ENCODE measurements at regions of chr16 and their contacts with region 1.

Region 1: GRCh38 chr16:49876716-49877129 is 20.8 kb upstream of the ZNF423 start:
- DNase-seq: peak; percentile 88
- ATAC-seq: peak; percentile 89
- H3K4me3 Mint-ChIP-seq: peak overlapping the region; percentile 76
- H3K27ac Mint-ChIP-seq: no peak overlapping the region
- H3K4me1 Mint-ChIP-seq: peaks cover 4% of the 10 kb centered on the region
- H3K27me3 Mint-ChIP-seq: peaks cover 9% of the 10 kb centered on the region
- CTCF ChIP-seq: peak; percentile 95

Region 2: GRCh38 chr16:49776085-49776595 is 100.6 kb before region 1 on chr16:
- CTCF ChIA-PET with region 1: interaction called, 10 read pairs
- POLR2A ChIA-PET with region 1: no interaction called
- DNase-seq: peak; percentile 76
- ATAC-seq: peak; percentile 90
- H3K4me3 Mint-ChIP-seq: peak overlapping the region; percentile 11; the same call in 1 of the 2 replicates
- H3K27ac Mint-ChIP-seq: peak overlapping the region; percentile 97
- H3K4me1 Mint-ChIP-seq: peaks cover 52% of the 10 kb centered on the region
- H3K27me3 Mint-ChIP-seq: no peaks in the 10 kb centered on the region
- CTCF ChIP-seq: no peak

Region 3: DNA sequence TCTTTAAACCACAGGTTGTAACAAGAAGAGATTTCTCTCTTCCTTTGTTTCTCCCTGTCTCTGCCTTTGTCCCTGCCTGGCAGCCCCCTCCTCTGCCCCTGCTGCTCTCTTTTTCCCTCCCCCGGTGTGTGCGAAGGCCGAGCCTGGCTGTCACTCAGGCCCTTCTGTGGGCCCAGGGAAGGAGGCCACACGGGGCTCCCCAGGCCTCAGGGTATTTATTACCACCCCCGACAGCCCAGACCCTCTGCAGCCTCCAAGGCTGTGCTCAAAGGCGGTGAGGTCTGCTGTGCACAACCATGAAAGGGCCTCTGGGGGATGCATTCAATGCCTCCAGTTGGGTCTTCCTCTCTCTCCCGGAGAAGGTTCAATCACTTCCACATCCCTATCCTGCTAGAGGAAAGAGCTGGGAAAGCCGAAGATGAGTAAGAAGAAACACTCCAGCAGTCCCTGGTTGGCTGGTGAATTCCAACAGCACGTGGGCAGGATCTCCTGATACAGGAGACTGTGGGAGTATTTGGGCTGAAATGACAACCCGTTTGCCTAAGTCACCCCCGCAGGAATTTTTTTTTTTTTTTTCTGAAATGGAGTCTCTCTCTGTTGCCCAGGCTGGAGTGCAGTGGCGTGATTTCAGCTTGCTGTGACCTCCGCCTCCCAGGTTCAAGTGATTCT is 55.0 kb before region 1 on chr16:
- CTCF ChIA-PET with region 1: interaction called, 10 read pairs
- POLR2A ChIA-PET with region 1: no interaction called
- DNase-seq: no peak
- ATAC-seq: peak; percentile 71
- H3K4me3 Mint-ChIP-seq: no peak overlapping the region
- H3K27ac Mint-ChIP-seq: peak overlapping the region; percentile 85
- H3K4me1 Mint-ChIP-seq: peaks cover 55% of the 10 kb centered on the region
- H3K27me3 Mint-ChIP-seq: no peaks in the 10 kb centered on the region
- CTCF ChIP-seq: no peak

Region 4: GRCh38 chr16:50848755-50849514 is 972.2 kb after region 1 on chr16:
- CTCF ChIA-PET with region 1: no interaction called
- POLR2A ChIA-PET with region 1: no interaction called
- DNase-seq: no peak
- ATAC-seq: no peak
- H3K4me3 Mint-ChIP-seq: no peak overlapping the region
- H3K27ac Mint-ChIP-seq: no peak overlapping the region
- H3K4me1 Mint-ChIP-seq: 0 out of 2 replicates have a peak, but pooled peaks cover 2% of the 10 kb centered on the region
- H3K27me3 Mint-ChIP-seq: no peaks in the 10 kb centered on the region
- CTCF ChIP-seq: no peak